ENCODE measurements at regions of chr1 and their contacts with region 1.

Region 1: DNA sequence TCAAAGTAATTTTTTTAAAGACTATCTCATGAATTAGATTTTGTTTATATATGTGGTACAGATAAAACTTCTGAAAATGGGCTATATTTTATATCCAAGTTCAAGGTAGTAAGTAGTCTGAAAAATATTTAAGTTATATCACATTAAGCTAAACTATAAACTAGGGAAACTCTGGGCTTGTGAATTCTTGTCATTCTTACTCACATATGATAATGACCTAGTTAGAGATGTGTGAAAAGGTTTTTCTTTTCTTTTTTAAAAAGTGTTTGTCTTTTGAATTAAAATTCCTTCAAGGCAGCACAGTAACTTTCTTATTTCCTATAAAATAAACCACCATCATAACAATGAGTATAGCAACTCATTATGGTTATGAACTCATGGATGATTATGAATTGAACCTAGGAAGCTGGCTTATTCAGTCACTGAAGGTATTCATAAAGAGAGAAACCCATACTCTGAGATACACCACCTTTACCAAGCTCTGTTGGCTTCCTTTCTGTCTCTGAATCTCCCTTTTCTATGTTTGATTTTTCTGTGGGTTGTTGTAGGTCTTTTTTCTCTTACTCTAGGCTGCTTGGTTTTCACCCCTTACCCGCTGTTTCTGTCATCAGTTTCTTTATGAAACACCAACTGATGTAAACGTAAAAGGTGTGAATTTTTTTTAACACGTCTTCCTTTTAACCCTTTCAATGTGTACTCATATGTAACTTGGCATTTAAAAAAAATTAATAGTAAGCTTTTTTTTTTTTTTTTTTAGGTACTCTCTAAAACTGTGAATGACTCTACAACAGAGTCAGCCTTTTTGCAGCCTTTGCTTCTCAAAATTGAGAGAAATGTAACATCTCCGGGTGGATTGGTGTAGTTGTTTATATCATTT is 25.2 kb downstream of the IL12RB2 start:
- DNase-seq: peak; percentile 67
- H3K4me3 Mint-ChIP-seq: no peak overlapping the region
- H3K27ac Mint-ChIP-seq: peak overlapping the region; percentile 97
- H3K4me1 Mint-ChIP-seq: peaks cover 79% of the 10 kb centered on the region
- H3K27me3 Mint-ChIP-seq: no peaks in the 10 kb centered on the region

Region 2: DNA sequence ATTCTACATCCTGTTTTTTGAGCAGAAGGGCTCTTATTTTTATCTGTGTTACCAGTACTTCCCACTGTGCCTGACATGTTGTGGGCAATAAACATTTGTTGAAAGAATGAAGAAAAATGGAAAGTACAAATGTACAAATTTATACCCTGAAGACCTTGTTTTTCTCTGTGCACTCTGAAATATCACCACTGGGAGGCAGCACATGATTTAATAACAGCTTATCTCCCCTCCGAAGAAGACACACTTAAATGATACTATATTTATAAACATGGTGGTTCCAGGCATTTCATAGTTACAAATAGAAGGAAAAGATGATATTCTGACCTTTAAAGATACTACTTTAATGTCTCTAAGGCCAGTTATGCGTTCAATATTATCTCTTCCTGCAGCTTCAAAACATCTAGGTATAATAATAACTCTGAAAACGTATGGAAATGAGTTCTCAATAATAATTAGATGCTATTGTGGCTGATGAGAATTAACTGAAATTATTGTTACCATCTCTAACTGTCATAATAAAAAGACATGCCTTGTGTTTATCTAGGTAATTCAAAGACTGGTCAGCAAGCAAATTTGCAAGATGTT is 567.8 kb before region 1 on chr1:
- CTCF ChIA-PET with region 1: no interaction called
- intact Hi-C with region 1: loop called (anchors 2 kb)
- DNase-seq: peak; percentile 80
- H3K4me3 Mint-ChIP-seq: no peak overlapping the region
- H3K27ac Mint-ChIP-seq: no peak overlapping the region
- H3K4me1 Mint-ChIP-seq: peaks cover 22% of the 10 kb centered on the region
- H3K27me3 Mint-ChIP-seq: no peaks in the 10 kb centered on the region

Region 3: GRCh38 chr1:67174716-67175284 is 158.1 kb before region 1 on chr1:
- CTCF ChIA-PET with region 1: interaction called, 9 read pairs
- intact Hi-C with region 1: loop called (anchors 1 kb)
- DNase-seq: peak; percentile 63
- H3K4me3 Mint-ChIP-seq: peak overlapping the region; percentile 7
- H3K27ac Mint-ChIP-seq: peak overlapping the region; percentile 99
- H3K4me1 Mint-ChIP-seq: peaks cover 81% of the 10 kb centered on the region
- H3K27me3 Mint-ChIP-seq: no peaks in the 10 kb centered on the region

Region 4: DNA sequence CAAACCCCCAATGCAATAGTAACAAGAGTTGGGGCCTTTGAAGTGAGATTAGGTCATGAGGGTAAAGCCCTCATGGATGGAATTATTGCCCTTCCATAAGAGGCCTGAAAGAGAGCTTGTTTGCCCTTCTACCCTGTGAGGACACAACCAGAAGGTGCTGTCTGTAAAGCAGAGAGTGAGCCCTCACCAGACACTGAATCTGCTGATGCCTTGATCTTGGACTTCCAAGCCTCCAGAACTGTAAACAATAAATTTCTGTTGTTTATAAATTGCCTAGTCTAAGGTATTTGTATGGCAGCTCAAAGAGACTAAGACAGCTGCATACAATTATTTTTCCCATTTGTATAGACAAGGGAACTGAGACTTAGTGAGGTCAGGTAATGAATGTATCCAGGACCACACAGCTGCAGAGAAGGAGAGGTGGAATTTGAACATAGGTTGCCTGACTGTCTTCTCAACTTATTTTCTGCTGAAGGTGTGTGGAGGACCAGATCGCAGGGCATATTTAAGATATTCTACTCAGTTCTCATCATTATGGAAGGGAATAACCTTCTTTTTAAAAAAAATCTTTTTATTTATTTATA is 148.0 kb before region 1 on chr1:
- CTCF ChIA-PET with region 1: no interaction called
- intact Hi-C with region 1: no loop called
- DNase-seq: no peak
- H3K4me3 Mint-ChIP-seq: no peak overlapping the region
- H3K27ac Mint-ChIP-seq: no peak overlapping the region
- H3K4me1 Mint-ChIP-seq: peaks cover 47% of the 10 kb centered on the region
- H3K27me3 Mint-ChIP-seq: no peaks in the 10 kb centered on the region

Region 5: DNA sequence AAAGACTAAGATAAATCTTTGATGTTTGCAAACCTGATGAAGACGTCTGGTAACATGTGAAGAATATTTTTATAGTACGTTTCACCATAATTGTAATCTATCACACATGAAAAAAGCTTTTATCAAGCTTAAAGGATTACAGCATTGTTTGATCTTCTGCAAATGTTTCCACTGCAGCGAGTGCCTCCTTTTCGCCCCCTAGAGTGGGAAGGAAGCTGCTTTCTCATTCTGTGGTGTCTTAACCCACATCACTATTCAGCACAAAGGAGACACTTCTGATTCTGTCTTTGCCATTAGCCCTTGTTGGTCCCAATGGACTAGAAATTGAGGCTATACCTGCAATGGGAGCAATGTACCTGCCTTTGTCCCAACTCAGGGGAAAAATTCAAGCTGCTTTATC is 71.2 kb before region 1 on chr1:
- CTCF ChIA-PET with region 1: interaction called, 5 read pairs
- intact Hi-C with region 1: loop called (anchors 1 kb)
- DNase-seq: peak; percentile 68
- H3K4me3 Mint-ChIP-seq: no peak overlapping the region
- H3K27ac Mint-ChIP-seq: no peak overlapping the region
- H3K4me1 Mint-ChIP-seq: peaks cover 26% of the 10 kb centered on the region
- H3K27me3 Mint-ChIP-seq: no peaks in the 10 kb centered on the region

Region 6: DNA sequence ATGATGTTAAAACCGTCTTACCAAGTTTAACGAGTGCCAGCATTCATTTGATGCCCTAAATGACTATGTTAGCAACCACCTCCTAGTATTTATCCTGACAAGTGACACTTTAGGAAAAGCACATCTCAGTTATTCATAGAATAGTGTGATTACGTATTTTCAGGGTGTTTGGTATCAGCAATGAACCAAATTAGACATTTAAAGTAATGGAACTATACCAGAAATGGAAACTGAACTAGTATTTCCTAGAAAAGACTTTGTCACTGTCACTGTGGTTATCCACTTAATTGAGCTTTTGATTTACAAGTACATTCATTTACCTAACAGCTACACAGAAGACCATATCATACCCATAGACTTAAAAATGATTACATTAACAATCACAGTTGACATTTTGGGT is 28.9 kb before region 1 on chr1:
- CTCF ChIA-PET with region 1: interaction called, 3 read pairs
- intact Hi-C with region 1: loop called (anchors 1 kb)
- DNase-seq: no peak
- H3K4me3 Mint-ChIP-seq: no peak overlapping the region
- H3K27ac Mint-ChIP-seq: peak overlapping the region; percentile 86
- H3K4me1 Mint-ChIP-seq: peaks cover 23% of the 10 kb centered on the region
- H3K27me3 Mint-ChIP-seq: no peaks in the 10 kb centered on the region

Region 7: GRCh38 chr1:67430352-67431155 is 97.7 kb after region 1 on chr1 and contains the start of gene SERBP1:
- CTCF ChIA-PET with region 1: no interaction called
- intact Hi-C with region 1: loop called (anchors 1 kb)
- DNase-seq: peak; percentile 97
- H3K4me3 Mint-ChIP-seq: peak within 1 kb of the TSS; percentile 97
- H3K27ac Mint-ChIP-seq: peak within 1 kb of the TSS; percentile 98
- H3K4me1 Mint-ChIP-seq: peaks cover 44% of the 10 kb centered on the region
- H3K27me3 Mint-ChIP-seq: no peaks in the 10 kb centered on the region
- total RNA-seq, gene SERBP1: 527 to 537 TPM

Region 8: GRCh38 chr1:67460676-67461500 is 128.0 kb after region 1 on chr1:
- CTCF ChIA-PET with region 1: no interaction called
- intact Hi-C with region 1: no loop called
- DNase-seq: no peak
- H3K4me3 Mint-ChIP-seq: no peak overlapping the region
- H3K27ac Mint-ChIP-seq: no peak overlapping the region
- H3K4me1 Mint-ChIP-seq: no peaks in the 10 kb centered on the region
- H3K27me3 Mint-ChIP-seq: no peaks in the 10 kb centered on the region